A673 (cell line): ENCODE measurements at regions of chr1 and their contacts with region 1.

Region 1: GRCh38 chr1:108503076-108503740 is 53.1 kb downstream of the NBPF6 start:
- DNase-seq: no peak
- H3K4me3 ChIP-seq: no peak overlapping the region
- H3K27ac ChIP-seq: no peak overlapping the region
- H3K4me1 ChIP-seq: no peaks in the 10 kb centered on the region
- H3K27me3 ChIP-seq: peaks cover 9% of the 10 kb centered on the region
- CTCF ChIP-seq: no peak

Region 2: GRCh38 chr1:108670131-108670773 is 167.0 kb after region 1 on chr1:
- CTCF ChIA-PET with region 1: no interaction called
- POLR2A ChIA-PET with region 1: no interaction called
- intact Hi-C with region 1: no loop called
- DNase-seq: no peak
- H3K4me3 ChIP-seq: no peak overlapping the region
- H3K27ac ChIP-seq: no peak overlapping the region
- H3K4me1 ChIP-seq: no peaks in the 10 kb centered on the region
- H3K27me3 ChIP-seq: no peaks in the 10 kb centered on the region
- CTCF ChIP-seq: no peak

Region 3: DNA sequence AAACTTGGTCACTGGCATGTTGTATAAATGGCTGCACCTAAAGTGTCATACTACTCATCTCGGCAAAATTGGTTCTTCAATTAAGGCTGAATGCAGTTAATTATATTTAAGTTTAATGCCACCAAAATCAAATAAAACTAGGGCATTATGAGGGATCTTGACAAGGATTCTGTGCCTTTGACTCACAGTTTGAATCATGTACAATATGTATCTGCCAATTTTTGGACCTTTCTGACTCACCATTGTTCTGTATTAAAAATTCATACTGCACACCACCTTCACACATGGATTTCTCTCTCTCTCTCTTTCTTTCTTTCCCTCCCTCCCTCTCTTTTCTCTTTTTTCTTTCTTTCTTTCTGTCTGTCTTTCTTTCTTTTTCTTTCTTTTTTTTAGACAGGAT is 229.2 kb after region 1 on chr1:
- CTCF ChIA-PET with region 1: no interaction called
- POLR2A ChIA-PET with region 1: no interaction called
- intact Hi-C with region 1: loop called (anchors 10 kb)
- DNase-seq: no peak
- H3K4me3 ChIP-seq: no peak overlapping the region
- H3K27ac ChIP-seq: no peak overlapping the region
- H3K4me1 ChIP-seq: peaks cover 4% of the 10 kb centered on the region
- H3K27me3 ChIP-seq: peaks cover 3% of the 10 kb centered on the region
- CTCF ChIP-seq: no peak